ENCODE measurements at regions of chr11 and their contacts with region 1.

Region 1: GRCh38 chr11:35822815-35823495 is 120.9 kb upstream of the LDLRAD3 start:
- H3K4me3 ChIP-seq: no peak overlapping the region
- H3K27ac ChIP-seq: no peak overlapping the region
- H3K4me1 ChIP-seq: no peaks in the 10 kb centered on the region
- CTCF ChIP-seq: no peak

Region 2: GRCh38 chr11:35608502-35609178 is 214.3 kb before region 1 on chr11:
- CTCF ChIA-PET with region 1: interaction called, 24 read pairs
- POLR2A ChIA-PET with region 1: no interaction called
- H3K4me3 ChIP-seq: no peak overlapping the region
- H3K27ac ChIP-seq: no peak overlapping the region
- H3K4me1 ChIP-seq: no peaks in the 10 kb centered on the region
- CTCF ChIP-seq: no peak

Region 3: GRCh38 chr11:35702126-35702525 is 120.8 kb before region 1 on chr11:
- CTCF ChIA-PET with region 1: no interaction called
- POLR2A ChIA-PET with region 1: no interaction called
- H3K4me3 ChIP-seq: no peak overlapping the region
- H3K27ac ChIP-seq: no peak overlapping the region
- H3K4me1 ChIP-seq: no peaks in the 10 kb centered on the region
- CTCF ChIP-seq: no peak

Region 4: DNA sequence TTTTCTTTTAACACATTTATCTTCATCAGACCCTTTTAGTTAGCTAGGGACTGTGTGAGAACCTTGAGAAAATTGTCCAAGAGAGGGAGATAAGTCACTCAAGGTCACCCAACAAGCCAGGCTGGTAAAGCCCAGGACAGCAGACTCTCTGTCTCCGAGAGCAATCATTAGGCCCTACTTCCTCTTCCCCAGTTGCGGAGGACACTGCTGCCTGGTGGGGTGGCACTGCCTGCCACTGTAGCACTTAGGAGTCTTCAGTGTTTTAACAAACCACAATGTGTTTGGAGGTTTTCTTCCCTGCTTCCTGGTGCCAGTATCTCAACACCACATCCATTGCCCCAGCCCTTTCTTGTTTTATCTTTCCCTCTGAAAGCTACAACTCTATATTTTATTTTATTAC is 11.2 kb before region 1 on chr11:
- CTCF ChIA-PET with region 1: interaction called, 57 read pairs
- POLR2A ChIA-PET with region 1: no interaction called
- H3K4me3 ChIP-seq: no peak overlapping the region
- H3K27ac ChIP-seq: no peak overlapping the region
- H3K4me1 ChIP-seq: no peaks in the 10 kb centered on the region
- CTCF ChIP-seq: no peak

Region 5: DNA sequence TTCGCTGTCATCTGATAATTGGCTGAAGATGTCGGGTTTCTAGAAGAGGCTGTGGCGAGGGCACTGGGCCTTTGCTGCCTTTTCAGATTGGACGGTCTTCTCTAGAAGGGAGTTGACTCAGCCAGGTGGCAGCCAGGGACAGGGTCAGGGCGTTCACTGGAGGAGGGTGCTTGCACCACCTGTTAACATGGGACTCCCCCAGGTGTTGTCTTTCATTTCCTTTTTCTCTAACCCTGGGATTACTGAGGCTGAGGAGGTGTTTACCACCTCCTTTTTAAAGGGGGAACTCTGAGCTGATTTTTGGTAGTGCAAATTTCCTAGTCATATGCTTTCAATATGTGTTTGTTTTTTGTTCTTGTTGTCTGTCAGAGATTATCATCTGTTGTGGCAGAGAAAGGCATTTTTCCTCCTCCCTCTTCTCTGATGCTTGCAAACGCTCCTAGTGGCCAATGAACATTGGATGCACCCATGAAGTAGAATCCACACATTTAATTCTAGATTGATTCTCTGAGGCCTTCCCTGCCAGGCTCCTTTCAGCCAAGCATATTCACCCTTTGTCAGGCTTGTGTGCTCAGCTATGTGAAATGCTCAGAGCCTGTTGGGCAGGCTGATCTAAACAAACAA is 175.1 kb after region 1 on chr11:
- CTCF ChIA-PET with region 1: interaction called, 10 read pairs
- POLR2A ChIA-PET with region 1: no interaction called
- H3K4me3 ChIP-seq: no peak overlapping the region
- H3K27ac ChIP-seq: no peak overlapping the region
- H3K4me1 ChIP-seq: no peaks in the 10 kb centered on the region
- CTCF ChIP-seq: no peak

Region 6: GRCh38 chr11:36062796-36063365 is 239.9 kb after region 1 on chr11:
- CTCF ChIA-PET with region 1: interaction called, 10 read pairs
- POLR2A ChIA-PET with region 1: no interaction called
- H3K4me3 ChIP-seq: no peak overlapping the region
- H3K27ac ChIP-seq: no peak overlapping the region
- H3K4me1 ChIP-seq: no peaks in the 10 kb centered on the region
- CTCF ChIP-seq: no peak

Region 7: GRCh38 chr11:36131721-36132397 is 308.9 kb after region 1 on chr11:
- CTCF ChIA-PET with region 1: interaction called, 21 read pairs
- POLR2A ChIA-PET with region 1: no interaction called
- H3K4me3 ChIP-seq: no peak overlapping the region
- H3K27ac ChIP-seq: no peak overlapping the region
- H3K4me1 ChIP-seq: no peaks in the 10 kb centered on the region
- CTCF ChIP-seq: peak; percentile 28; the same call in 1 of the 2 replicates

Region 8: DNA sequence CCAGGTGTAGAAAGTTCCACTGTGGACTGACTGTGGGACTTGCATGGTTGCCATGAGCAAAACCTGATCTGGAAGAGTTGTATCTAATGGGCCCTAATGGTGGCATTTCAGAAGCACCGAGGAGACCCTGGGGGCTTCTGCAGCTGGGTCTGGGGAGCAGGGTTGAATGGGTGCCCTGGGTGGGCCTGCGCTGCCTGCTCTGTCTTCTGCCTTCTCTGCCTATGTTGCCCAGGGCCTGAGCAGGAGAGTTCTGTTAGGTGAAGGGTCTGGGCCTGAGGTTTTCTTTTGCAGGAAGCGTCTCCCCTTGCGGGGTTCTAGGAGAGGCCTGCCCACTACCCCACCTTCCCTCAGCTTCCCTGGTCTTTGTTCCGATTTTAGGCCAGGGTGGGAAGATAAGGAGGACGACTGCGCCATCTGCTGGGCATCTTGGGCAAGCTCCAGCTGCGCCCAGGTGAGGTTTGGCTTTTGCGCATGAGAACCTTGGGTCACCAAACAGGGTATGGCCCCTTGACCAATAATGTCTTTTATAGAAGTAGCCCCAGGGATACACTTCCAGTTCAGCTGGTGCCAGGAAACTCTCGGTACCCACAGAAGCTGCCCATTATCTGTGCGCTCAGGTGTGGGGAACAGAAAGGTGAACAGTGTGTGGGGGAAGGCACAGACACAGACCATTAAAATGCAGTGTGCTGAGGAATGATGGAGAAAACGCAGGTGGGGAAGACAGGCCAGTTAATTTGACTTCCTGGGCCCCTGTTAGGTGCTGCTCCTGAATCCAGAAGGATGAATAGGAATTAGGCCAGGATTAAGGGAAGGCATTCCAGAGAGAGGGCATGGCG is 443.1 kb after region 1 on chr11:
- CTCF ChIA-PET with region 1: interaction called, 22 read pairs
- POLR2A ChIA-PET with region 1: interaction called, 5 read pairs
- H3K4me3 ChIP-seq: no peak overlapping the region
- H3K27ac ChIP-seq: no peak overlapping the region
- H3K4me1 ChIP-seq: no peaks in the 10 kb centered on the region
- CTCF ChIP-seq: peak; percentile 21; the same call in 1 of the 2 replicates